Common myeloid progenitor, CD34-positive (primary cell): ENCODE measurements at regions of chr19 and their contacts with region 1.

Region 1: GRCh38 chr19:49929611-49930482 is 543 bp upstream of the NUP62 start:
- DNase-seq: peak; percentile 99 to 100 (median 99)
- H3K4me3 ChIP-seq: peak overlapping the region; percentile 83 to 94 (median 86)
- H3K27ac ChIP-seq: peak overlapping the region; percentile 81 to 91
- H3K4me1 ChIP-seq: peaks cover 3 to 37% (median 27%) of the 10 kb centered on the region in 4 experiments
- H3K27me3 ChIP-seq: no peaks in the 10 kb centered on the region

Region 2: GRCh38 chr19:49877020-49877878 is 52.6 kb before region 1 on chr19 and contains the starts of genes AKT1S1 and TBC1D17:
- CTCF ChIA-PET with region 1: interaction called, 8 read pairs
- POLR2A ChIA-PET with region 1: interaction called, 15 read pairs
- DNase-seq: peak; percentile 100
- H3K4me3 ChIP-seq: peak within 1 kb of the TSS; percentile 68 to 100 (median 100)
- H3K27ac ChIP-seq: peak within 1 kb of the TSS; percentile 99 to 100
- H3K4me1 ChIP-seq: peaks cover 0 to 27% (median 22%) of the 10 kb centered on the region in 4 experiments
- H3K27me3 ChIP-seq: no peaks in the 10 kb centered on the region

Region 3: GRCh38 chr19:49896863-49897621 is 32.8 kb before region 1 on chr19 and contains the start of gene IL4I1:
- CTCF ChIA-PET with region 1: interaction called, 3 read pairs
- POLR2A ChIA-PET with region 1: interaction called, 15 read pairs
- DNase-seq: peak; percentile 82 to 96 (median 95)
- H3K4me3 ChIP-seq: peak within 1 kb of the TSS in 5 of 7 experiments; percentile 0 to 67 (median 43)
- H3K27ac ChIP-seq: peak within 1 kb of the TSS in 1 of 2 experiments; percentile 73
- H3K4me1 ChIP-seq: peaks cover 0 to 30% (median 30%) of the 10 kb centered on the region in 4 experiments
- H3K27me3 ChIP-seq: peaks cover 0 to 6% (median 0%) of the 10 kb centered on the region in 5 experiments

Region 4: DNA sequence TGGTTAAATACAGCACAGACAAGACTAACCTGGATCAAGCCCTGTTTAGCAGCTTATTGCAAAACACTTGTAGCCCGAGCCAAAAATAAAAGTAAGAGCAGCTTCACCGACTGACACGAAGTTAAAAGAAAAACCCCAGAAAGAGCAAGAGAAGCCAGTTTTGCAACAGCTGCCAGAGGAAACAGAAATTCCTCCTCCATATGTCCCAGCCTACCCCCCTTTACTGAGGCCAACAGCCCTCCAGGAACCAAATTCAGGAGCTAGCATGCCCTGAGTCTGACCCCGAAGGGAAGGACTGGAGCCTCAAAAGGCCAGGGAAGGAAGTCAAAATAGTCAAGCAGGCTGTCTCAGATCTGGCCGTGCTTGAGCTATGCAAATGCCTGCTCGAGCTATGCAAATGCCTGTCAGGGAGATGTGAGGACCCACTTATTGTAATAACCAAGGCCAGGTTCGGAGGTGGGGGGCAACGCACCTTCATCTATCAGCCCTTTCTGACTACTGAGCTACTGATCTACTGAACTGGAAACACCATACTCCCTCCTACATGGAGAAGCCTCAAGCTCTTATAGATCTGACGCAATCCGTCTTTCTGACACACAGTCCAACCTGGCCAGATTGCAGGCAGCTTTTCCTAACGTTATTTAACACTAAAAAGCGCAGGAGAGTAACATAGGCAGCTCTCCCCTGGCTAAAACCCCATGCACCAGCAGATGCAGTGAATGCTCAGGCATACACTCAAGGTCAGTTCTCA is 24.4 kb after region 1 on chr19:
- CTCF ChIA-PET with region 1: no interaction called
- POLR2A ChIA-PET with region 1: no interaction called
- DNase-seq: no peak
- H3K4me3 ChIP-seq: peak overlapping the region in 1 of 7 experiments; percentile 20
- H3K27ac ChIP-seq: no peak overlapping the region
- H3K4me1 ChIP-seq: peaks cover 6 to 23% (median 15%) of the 10 kb centered on the region in 4 experiments
- H3K27me3 ChIP-seq: peaks cover 0 to 5% (median 0%) of the 10 kb centered on the region in 5 experiments